Brain microvascular endothelial cell (primary cell): ENCODE measurements at regions of chr1 and their contacts with region 1.

Region 1: DNA sequence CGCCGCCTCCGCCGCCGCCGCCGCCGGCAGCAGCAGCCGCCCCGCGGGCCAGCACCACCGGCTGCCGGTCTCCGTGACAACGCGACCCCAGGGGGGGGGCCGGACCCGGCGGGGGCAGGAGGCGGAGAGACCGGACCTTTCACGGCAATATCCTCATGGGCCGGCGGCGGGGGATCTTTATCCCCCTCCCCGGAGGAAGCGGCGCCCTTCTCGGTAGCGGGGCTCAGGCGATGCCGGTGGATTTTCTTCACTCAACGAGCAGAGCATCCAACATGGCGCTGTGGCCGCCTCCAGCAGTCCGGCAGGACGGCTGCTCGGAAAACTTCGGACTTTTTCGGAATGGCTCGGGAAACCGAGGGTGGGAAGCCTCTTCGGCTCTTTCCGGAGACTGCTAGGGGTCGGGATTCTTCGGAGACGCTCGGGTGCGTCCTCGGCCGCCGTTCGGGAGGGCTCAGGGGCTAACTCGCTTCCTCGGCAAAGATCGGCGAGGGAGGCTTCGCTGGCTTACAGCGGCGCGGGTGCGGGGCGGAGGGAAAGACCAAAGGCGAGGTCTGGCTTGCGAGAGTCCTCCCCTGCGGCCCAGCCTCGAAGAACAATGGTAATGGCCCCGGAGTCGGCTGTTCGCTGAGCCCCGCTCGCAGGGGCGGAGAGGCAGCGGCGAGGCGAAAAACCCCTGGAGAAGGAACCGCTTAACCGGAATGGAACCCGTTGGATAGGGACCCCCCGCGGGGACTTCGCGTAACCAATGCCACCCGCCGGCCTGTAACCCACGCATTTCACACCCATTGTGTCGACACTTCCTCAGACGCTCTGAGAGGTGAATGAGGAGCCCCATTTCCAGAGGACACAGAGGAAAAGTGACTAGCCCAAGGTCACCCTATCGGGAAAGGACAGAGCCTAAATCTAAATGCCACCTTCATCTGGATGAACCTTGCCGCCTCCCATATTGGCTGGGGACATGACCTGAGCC is at the start of gene EIF4G3:
- DNase-seq: peak; percentile 94
- H3K4me3 ChIP-seq: peak within 1 kb of the TSS; percentile 93
- H3K27ac ChIP-seq: peak within 1 kb of the TSS; percentile 94
- H3K27me3 ChIP-seq: no peaks in the 10 kb centered on the region
- CTCF ChIP-seq: no peak

Region 2: GRCh38 chr1:20981915-20982314 is 195.0 kb before region 1 on chr1:
- in situ Hi-C with region 1: loop called (anchors 25 kb)
- DNase-seq: peak; percentile 10
- H3K4me3 ChIP-seq: no peak overlapping the region
- H3K27ac ChIP-seq: no peak overlapping the region
- H3K27me3 ChIP-seq: no peaks in the 10 kb centered on the region
- CTCF ChIP-seq: peak; percentile 35

Region 3: DNA sequence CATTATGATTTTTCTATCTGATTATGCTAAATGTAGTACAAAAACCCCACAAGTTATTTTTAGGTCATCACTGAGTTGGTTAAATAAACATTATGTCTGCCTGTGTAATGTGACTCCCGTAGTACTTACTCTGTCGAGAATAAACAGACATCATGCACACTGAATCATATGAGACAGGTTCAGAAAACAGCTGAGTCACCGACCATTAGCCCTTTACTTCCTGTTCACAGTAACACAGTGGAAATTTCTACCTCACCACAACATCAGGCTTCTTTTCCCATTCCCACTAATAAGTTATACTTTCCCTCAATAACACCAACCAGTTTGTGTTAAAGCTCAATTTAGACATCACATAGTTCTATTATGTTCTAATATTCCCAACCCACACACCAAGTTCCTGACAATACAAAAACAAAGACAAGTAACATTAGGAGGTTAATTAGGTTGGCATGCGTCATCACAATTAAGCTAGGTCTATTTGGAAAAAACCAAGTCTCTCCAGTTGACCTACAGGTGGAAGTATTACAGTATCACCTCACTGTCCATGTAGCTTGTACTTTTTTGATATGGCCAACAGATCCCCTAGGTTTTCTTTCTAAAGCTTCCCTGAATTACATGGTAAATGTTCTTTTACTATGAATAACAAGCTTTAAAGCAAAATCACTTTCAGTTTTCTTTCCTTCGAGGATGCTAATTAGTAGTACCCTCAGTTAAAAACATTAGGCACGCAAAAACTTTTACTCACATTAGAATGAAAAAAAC is 154.4 kb before region 1 on chr1:
- in situ Hi-C with region 1: no loop called
- DNase-seq: peak; percentile 97
- H3K4me3 ChIP-seq: no peak overlapping the region
- H3K27ac ChIP-seq: peak overlapping the region; percentile 93
- H3K27me3 ChIP-seq: no peaks in the 10 kb centered on the region
- CTCF ChIP-seq: no peak

Region 4: GRCh38 chr1:21289700-21290545 is 113.1 kb after region 1 on chr1 and contains the start of gene ECE1:
- in situ Hi-C with region 1: no loop called
- DNase-seq: no peak
- H3K4me3 ChIP-seq: peak within 1 kb of the TSS; percentile 71
- H3K27ac ChIP-seq: peak within 1 kb of the TSS; percentile 35
- H3K27me3 ChIP-seq: no peaks in the 10 kb centered on the region
- CTCF ChIP-seq: no peak